Activated T-helper 2 cell treated with anti-CD3 and anti-CD28 coated beads, Interferon-gamma antibody, Interleukin-2, Interleukin-4, amounts not matched to agents 10 μg/mL and 5 μg/mL and 100 μg/mL, durations not matched to agents 14 hours and 24 hours and 36 hours (primary cell): ENCODE measurements at regions of chr13 and their contacts with region 1.

Region 1: GRCh38 chr13:49443704-49444523 is at the starts of genes CAB39L and SETDB2:
- DNase-seq: peak; percentile 99
- H3K4me3 Mint-ChIP-seq: peak within 1 kb of the TSS; percentile 95
- H3K27ac Mint-ChIP-seq: peak within 1 kb of the TSS; percentile 99
- H3K4me1 Mint-ChIP-seq: peaks cover 49% of the 10 kb centered on the region
- H3K27me3 Mint-ChIP-seq: peaks cover 8% of the 10 kb centered on the region
- total RNA-seq, gene CAB39L: 4.0 and 5.8 TPM in 2 replicates
- total RNA-seq, gene SETDB2: 10.8 and 11.0 TPM in 2 replicates

Region 2: GRCh38 chr13:48532506-48533499 is 911.1 kb before region 1 on chr13 and contains the start of gene RCBTB2:
- intact Hi-C with region 1: no loop called
- DNase-seq: peak; percentile 99
- H3K4me3 Mint-ChIP-seq: peak within 1 kb of the TSS; percentile 90
- H3K27ac Mint-ChIP-seq: peak within 1 kb of the TSS; percentile 89
- H3K4me1 Mint-ChIP-seq: peaks cover 28% of the 10 kb centered on the region
- H3K27me3 Mint-ChIP-seq: peaks cover 2% of the 10 kb centered on the region
- total RNA-seq, gene RCBTB2: 2.7 and 3.4 TPM in 2 replicates

Region 3: DNA sequence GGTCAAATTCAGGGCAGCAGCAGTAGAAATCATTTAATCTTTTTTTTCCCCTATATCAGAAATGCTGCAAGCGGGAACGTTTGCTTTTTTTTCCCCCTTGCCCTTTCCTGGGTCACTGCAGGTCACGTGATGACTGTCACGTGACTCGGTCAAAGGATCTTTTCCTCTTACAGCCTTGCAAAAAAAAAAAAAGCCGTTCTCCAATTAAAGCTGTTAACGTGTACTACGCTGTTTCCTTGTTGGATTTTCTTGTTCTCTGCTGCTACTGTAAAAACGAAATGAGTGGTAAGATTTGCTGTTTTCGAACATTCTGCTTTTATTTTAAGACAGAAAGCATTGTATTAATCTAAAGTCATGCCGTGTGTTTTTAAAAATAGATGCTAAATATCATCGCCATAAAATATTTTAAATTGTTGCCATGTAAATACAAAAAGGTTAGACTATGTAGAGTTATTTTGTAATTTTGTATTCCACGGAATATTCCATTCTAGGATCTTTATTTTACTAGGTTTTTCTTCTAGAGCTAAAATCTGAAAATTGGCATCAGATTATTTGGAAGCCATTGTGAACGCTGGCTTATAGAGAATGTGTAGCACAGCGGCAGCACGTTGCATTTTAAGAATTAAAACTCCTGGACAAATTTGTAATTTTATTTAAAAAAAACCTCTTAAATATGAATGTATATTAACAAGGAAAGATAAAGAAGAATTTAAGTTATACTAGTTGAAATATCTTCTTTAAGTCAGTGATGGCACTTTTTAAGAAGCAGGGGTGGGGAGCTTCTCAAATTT is 333.6 kb before region 1 on chr13:
- intact Hi-C with region 1: loop called (anchors 5 kb)
- DNase-seq: peak; percentile 68
- H3K4me3 Mint-ChIP-seq: peak overlapping the region; percentile 85
- H3K27ac Mint-ChIP-seq: peak overlapping the region; percentile 77
- H3K4me1 Mint-ChIP-seq: peaks cover 16% of the 10 kb centered on the region
- H3K27me3 Mint-ChIP-seq: no peaks in the 10 kb centered on the region

Region 4: DNA sequence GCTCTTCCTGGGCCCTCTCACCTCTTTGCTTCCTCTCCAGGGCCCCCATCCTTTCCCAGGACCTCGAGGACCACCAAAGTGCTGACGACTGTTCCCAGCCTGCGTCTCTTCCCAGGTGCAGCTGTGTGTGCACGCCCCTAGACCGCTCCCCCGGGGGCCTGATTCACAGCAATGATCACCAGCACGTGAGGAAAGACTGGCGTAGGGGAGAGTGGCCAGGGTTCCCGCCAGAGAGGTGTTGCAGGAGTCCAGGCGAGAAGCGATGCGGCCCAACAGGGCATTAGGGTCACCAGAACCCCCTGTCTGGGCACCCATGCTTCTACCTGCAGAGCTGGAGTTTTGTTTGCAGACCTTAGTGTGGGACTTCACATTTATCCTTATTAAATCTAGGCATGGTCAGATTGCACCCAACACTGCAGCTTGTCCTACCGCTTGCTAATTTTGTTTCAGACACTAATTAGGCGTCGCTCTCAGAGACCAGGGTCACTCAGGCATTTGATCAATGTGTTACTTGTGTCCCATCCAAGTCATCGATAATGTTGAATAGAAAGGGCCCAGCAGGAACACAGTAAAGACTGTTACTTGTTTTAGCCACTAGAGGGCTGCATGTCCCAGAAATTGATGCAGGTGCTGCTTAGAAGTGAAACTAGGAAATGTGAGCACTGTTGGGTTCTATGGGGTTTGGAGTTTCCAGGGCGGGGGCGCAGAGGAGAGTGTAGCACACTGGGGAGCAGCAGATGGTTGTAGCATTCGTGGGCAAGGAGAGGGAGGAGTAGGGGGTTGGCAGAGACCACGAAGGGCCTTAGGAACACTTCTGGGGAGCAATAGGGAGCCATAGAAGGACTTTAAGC is 142.9 kb before region 1 on chr13:
- intact Hi-C with region 1: loop called (anchors 5 kb)
- DNase-seq: peak; percentile 63
- H3K4me3 Mint-ChIP-seq: peak overlapping the region; percentile 24
- H3K27ac Mint-ChIP-seq: peak overlapping the region; percentile 47
- H3K4me1 Mint-ChIP-seq: peaks cover 12% of the 10 kb centered on the region
- H3K27me3 Mint-ChIP-seq: no peaks in the 10 kb centered on the region

Region 5: DNA sequence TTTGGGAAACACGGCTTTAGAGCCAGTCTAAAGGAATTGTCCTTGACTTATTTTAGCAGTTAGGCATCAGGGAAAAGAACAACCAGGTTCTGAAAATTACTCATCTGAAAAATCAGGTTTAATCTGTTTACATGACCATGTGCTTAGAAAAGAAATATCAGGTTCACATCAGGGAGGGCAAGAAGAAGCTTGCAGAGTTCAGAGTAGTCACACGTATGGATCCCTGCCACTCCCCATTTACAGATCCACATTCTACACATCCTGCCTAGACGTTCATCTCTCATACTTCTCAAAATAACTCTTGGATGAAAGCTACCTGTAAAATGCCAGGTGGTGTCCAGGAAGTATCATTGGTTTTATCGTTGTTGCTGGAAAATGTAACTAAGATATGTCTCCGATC is 37.9 kb after region 1 on chr13:
- intact Hi-C with region 1: no loop called
- DNase-seq: no peak
- H3K4me3 Mint-ChIP-seq: no peak overlapping the region
- H3K27ac Mint-ChIP-seq: no peak overlapping the region
- H3K4me1 Mint-ChIP-seq: no peaks in the 10 kb centered on the region
- H3K27me3 Mint-ChIP-seq: no peaks in the 10 kb centered on the region

Region 6: DNA sequence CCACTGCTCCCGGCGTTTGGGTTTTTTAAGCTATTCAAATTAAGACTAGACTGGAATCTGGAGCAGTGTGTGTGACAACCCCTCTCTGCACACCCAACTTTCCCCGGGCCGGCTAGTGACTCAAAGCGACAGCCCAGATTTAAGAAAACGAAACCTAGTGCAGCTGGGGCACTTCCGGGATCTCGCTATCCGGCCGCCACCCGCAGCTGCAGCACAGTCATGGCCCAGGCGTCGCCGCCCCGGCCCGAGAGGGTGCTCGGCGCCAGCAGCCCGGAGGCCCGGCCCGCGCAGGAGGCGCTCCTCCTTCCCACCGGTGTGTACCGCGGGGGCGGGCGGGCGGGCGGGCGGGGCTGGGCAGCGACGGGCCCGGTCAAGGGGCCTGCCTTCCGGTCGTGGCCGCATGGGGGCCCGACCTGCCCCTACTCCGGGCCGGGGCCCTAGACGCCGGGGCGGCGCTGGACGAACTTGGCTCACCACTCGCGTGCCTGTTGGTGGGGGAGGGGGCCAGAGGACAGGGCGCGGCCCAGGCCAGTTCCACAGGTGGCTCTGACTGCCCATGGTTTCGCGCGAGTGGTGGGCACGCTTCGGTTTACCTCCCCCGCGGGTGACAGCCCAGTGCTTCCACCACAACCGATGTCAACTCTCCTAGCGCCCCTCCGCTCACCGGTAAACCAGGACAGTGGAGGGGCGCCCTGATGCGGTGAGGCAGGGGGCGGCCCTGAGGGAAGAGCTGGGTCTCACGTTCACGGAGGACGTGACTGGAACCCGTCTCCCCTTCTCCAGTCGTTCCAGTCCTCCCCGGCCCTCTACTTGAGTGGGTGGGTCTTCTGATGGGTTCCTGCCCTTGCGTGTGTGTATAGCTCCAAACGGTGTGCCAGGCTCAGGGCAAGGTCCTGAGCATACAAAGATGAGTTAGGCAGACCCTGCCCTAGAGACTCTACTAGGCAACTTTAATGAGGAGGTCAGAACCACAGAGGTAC is 52.2 kb after region 1 on chr13 and contains the start of gene PHF11:
- intact Hi-C with region 1: loop called (anchors 1 kb)
- DNase-seq: peak; percentile 84
- H3K4me3 Mint-ChIP-seq: peak within 1 kb of the TSS; percentile 91
- H3K27ac Mint-ChIP-seq: peak within 1 kb of the TSS; percentile 97
- H3K4me1 Mint-ChIP-seq: peaks cover 50% of the 10 kb centered on the region
- H3K27me3 Mint-ChIP-seq: no peaks in the 10 kb centered on the region
- total RNA-seq, gene PHF11: 47.9 and 52.9 TPM in 2 replicates

Region 7: GRCh38 chr13:49606747-49607648 is 163.1 kb after region 1 on chr13:
- intact Hi-C with region 1: loop called (anchors 5 kb)
- DNase-seq: peak; percentile 66
- H3K4me3 Mint-ChIP-seq: peak overlapping the region; percentile 73
- H3K27ac Mint-ChIP-seq: peak overlapping the region; percentile 72
- H3K4me1 Mint-ChIP-seq: peaks cover 5% of the 10 kb centered on the region
- H3K27me3 Mint-ChIP-seq: peaks cover 4% of the 10 kb centered on the region

Region 8: DNA sequence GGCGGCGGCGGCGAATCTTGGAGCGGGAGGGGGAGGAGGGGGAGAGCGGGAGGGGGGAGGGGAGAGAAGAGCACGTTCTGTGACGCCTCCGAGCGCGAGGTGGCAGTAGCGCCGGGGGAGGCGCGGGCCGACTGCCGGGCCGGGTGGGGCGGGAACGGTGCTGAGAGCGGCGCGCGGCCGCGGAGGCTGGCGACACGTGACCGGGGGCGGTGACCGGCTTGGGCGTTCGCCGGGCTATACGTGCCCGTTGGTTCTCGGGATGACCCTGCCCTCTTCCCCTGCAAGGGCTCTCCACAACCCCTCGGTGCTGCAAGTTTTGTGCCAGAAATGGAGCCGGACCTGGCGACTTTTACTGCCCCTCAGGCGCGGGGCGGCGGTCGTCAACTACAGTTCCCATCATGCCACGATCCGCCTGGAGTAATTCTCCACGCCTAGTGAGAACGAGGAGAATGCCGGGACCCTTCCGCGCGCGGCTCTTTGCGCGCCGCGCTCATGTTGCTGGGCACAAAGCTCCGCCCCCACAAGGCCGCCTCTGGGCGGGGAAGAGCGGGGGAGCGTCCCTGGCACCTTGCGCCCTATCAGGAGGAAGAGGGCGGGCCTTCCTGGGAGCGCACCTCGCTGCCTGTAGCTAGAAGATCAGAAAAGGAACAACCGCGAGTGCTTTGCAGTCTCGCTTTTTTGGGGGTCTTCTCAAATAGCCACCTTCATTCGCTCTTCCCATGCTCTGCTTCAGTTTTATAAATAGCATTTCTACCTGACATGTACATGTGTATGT is 348.8 kb after region 1 on chr13 and contains the start of gene KPNA3:
- intact Hi-C with region 1: loop called (anchors 2 kb)
- DNase-seq: peak; percentile 93
- H3K4me3 Mint-ChIP-seq: peak within 1 kb of the TSS; percentile 92
- H3K27ac Mint-ChIP-seq: peak within 1 kb of the TSS; percentile 97
- H3K4me1 Mint-ChIP-seq: peaks cover 29% of the 10 kb centered on the region
- H3K27me3 Mint-ChIP-seq: peaks cover 4% of the 10 kb centered on the region
- total RNA-seq, gene KPNA3: 46.1 and 49.0 TPM in 2 replicates